Activated naive CD4-positive, alpha-beta T cell treated with anti-CD3 and anti-CD28 coated beads, Interleukin-2, amount 10 ng/mL, durations not matched to agents 7 days and 5 days (primary cell): ENCODE measurements at regions of chr19 and their contacts with region 1.

Region 1: DNA sequence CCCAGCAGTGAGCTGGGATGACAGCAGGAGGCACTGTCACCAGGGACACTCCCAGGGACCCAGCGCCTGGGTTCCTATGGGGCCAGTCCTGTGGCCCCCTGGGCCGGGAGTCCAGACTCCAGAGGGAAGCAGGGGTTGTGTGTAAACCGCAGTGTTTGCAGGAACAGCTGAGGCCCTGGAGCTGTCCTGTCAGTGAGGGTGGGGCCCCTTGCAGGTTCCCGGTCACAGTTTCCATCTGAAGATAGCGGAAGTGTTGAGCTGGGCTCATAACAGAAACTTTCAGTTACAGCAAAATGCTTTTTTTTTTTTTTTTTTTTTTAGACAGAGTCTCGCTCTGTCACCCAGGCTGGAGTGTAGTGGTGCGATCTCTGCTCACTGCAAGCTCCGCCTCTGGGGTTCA is 17.7 kb upstream of the CSNK1G2 start:
- DNase-seq: peak; percentile 65
- H3K4me3 Mint-ChIP-seq: no peak overlapping the region
- H3K27ac Mint-ChIP-seq: peak overlapping the region; percentile 87
- H3K4me1 Mint-ChIP-seq: peaks cover 41% of the 10 kb centered on the region
- H3K27me3 Mint-ChIP-seq: peaks cover 4% of the 10 kb centered on the region

Region 2: GRCh38 chr19:1896508-1896907 is 26.8 kb before region 1 on chr19:
- CTCF ChIA-PET with region 1: interaction called, 10 read pairs
- DNase-seq: no peak
- H3K4me3 Mint-ChIP-seq: peak overlapping the region; percentile 79
- H3K27ac Mint-ChIP-seq: peak overlapping the region; percentile 98
- H3K4me1 Mint-ChIP-seq: peaks cover 51% of the 10 kb centered on the region
- H3K27me3 Mint-ChIP-seq: no peaks in the 10 kb centered on the region